Heart right ventricle (tissue), 16 donors: ENCODE measurements at regions of chr6 and their contacts with region 1.

Region 1: DNA sequence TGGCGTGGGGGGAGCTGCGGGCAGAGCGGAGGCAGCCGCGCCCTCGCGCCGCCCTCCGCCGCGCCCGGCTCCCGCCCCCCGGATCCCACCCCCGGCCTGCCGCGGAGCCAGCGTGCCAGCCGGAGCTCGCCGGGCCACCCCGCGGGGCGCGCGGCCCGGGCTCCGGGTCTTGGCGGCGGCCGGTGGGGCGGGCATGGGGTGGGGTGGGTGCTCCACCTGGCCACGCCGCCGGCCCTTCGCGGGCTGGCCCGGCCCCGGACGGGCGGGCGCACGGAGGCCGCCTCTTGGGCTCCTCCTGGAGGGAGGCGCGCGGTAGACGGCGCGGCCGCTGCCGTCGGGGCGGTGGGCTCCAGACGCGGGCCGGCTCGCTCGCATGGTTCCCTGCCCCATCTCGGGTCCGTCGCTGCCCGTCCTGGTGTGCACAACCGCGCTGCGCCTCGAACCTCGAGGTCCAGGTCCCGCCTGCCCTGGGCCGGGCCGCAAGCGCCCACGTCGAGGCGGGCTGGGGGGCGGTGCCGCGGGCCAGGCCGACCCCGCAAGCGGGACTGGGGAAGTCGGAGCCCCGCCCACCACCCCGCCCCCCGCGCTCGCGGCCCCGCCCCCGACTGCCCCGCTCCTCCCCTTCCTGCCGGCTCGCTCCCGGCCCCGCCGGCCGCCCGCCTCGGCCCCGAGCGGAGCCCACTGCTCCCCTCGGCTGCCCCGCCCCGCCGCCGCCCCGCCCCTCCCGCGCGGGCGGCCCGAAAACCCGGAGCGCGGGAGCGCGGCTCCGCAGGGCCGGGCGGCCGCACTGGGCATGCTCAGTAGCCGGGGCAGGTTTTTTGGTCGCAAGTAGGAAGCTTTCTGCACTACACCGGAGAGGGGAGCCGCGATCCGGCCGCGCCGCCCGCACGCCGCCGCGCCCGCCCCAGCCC is at the start of gene CDYL:
- DNase-seq: peak; percentile 85 to 92
- ATAC-seq: peak; percentile 87 to 94 (median 92)
- H3K4me3 ChIP-seq: peak within 1 kb of the TSS; percentile 63 to 82 (median 71)
- H3K27ac ChIP-seq: peak within 1 kb of the TSS in 9 of 10 donors; percentile 54 to 89 (median 80)
- H3K4me1 ChIP-seq: peaks cover 0 to 43% (median 18%) of the 10 kb centered on the region in 9 donors
- H3K27me3 ChIP-seq: no peaks in the 10 kb centered on the region
- CTCF ChIP-seq: peak in 7 of 9 donors; percentile 5 to 53 (median 33)
- total RNA-seq, gene CDYL: 29.0 to 39.9 (median 33.4) TPM

Region 2: GRCh38 chr6:4313044-4313686 is 462.7 kb before region 1 on chr6:
- intact Hi-C with region 1: loop called in 1 of 10 experiments (anchors 10 kb)
- DNase-seq: peak in 1 of 2 donors; percentile 36
- ATAC-seq: peak; percentile 35 to 75 (median 61)
- H3K4me3 ChIP-seq: no peak overlapping the region
- H3K27ac ChIP-seq: peak overlapping the region in 6 of 10 donors; percentile 6 to 57 (median 32)
- H3K4me1 ChIP-seq: peaks cover 3 to 29% (median 20%) of the 10 kb centered on the region in 9 donors
- H3K27me3 ChIP-seq: no peaks in the 10 kb centered on the region
- CTCF ChIP-seq: peak; percentile 13 to 60 (median 48)

Region 3: GRCh38 chr6:4344317-4344899 is 431.4 kb before region 1 on chr6:
- intact Hi-C with region 1: loop called in 1 of 10 experiments (anchors 10 kb)
- DNase-seq: no peak
- ATAC-seq: peak in 1 of 8 donors; percentile 28
- H3K4me3 ChIP-seq: peak overlapping the region in 6 of 10 donors; percentile 31 to 57 (median 54)
- H3K27ac ChIP-seq: peak overlapping the region in 4 of 10 donors; percentile 76 to 90 (median 86)
- H3K4me1 ChIP-seq: peaks cover 0 to 37% (median 8%) of the 10 kb centered on the region in 9 donors
- H3K27me3 ChIP-seq: no peaks in the 10 kb centered on the region
- CTCF ChIP-seq: no peak

Region 4: DNA sequence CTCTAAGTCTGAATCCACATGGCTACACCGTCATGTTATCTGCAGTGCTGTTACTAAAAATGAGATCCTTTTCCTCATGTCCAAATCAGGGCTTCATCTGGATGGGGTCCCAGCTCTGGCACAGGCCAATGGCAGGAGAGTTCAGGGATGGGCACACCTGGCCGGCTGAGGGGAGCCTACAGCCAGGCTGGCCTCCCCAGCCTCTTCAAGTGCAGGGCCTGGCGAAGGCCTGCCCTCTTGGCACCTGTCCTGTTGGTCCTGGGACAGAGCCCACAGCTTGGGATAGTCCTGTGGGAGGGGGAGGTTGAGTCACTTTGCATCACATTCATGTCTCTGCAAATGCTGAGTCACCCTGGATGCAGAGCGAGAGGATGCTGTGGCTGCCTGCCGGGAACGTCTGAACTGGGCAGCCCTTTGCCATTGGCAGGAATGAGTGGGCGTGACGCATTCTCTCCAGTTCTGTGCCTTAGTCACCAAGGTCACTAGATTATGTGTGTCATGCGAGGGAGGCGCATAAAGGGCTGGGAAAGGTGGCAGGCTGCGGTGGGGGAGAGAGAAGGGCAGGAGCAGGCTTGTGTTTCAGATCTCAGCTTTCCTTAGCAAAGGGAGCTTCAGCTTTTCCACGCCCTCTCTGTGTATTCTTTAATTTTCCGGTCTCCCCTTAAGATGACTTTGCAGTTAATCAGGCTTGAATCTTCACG is 417.3 kb before region 1 on chr6:
- intact Hi-C with region 1: loop called in 1 of 10 experiments (anchors 5 kb)
- DNase-seq: peak; percentile 86 to 91
- ATAC-seq: peak; percentile 89 to 98 (median 94)
- H3K4me3 ChIP-seq: peak overlapping the region in 2 of 10 donors; percentile 5 to 15
- H3K27ac ChIP-seq: peak overlapping the region; percentile 66 to 96 (median 90)
- H3K4me1 ChIP-seq: peaks cover 2 to 16% (median 13%) of the 10 kb centered on the region in 9 donors
- H3K27me3 ChIP-seq: no peaks in the 10 kb centered on the region
- CTCF ChIP-seq: no peak

Region 5: GRCh38 chr6:4647414-4648365 is 128.1 kb before region 1 on chr6:
- intact Hi-C with region 1: loop called in 8 of 10 experiments (anchors 2 to 10 kb)
- DNase-seq: peak; percentile 83 to 89
- ATAC-seq: peak; percentile 95 to 99 (median 98)
- H3K4me3 ChIP-seq: peak overlapping the region in 9 of 10 donors; percentile 18 to 42 (median 39)
- H3K27ac ChIP-seq: peak overlapping the region in 8 of 10 donors; percentile 14 to 65 (median 52)
- H3K4me1 ChIP-seq: peaks cover 0 to 13% (median 8%) of the 10 kb centered on the region in 9 donors
- H3K27me3 ChIP-seq: peaks cover 0 to 3% (median 0%) of the 10 kb centered on the region in 7 donors
- CTCF ChIP-seq: peak in 1 of 9 donors; percentile 6

Region 6: GRCh38 chr6:4936681-4937041 is 160.8 kb after region 1 on chr6:
- intact Hi-C with region 1: loop called in 5 of 10 experiments (anchors 5 to 10 kb)
- DNase-seq: peak in 1 of 2 donors; percentile 25
- ATAC-seq: peak in 3 of 8 donors; percentile 32 to 51 (median 38)
- H3K4me3 ChIP-seq: no peak overlapping the region
- H3K27ac ChIP-seq: no peak overlapping the region
- H3K4me1 ChIP-seq: peaks cover 6 to 43% (median 31%) of the 10 kb centered on the region in 9 donors
- H3K27me3 ChIP-seq: no peaks in the 10 kb centered on the region
- CTCF ChIP-seq: peak; percentile 36 to 80 (median 68)

Region 7: GRCh38 chr6:5003604-5004372 is 227.9 kb after region 1 on chr6 and contains the start of gene RPP40:
- intact Hi-C with region 1: loop called in 3 of 10 experiments (anchors 5 to 10 kb)
- DNase-seq: peak; percentile 98
- ATAC-seq: peak; percentile 99 to 100 (median 99)
- H3K4me3 ChIP-seq: peak within 1 kb of the TSS; percentile 39 to 83 (median 64)
- H3K27ac ChIP-seq: peak within 1 kb of the TSS; percentile 78 to 98 (median 90)
- H3K4me1 ChIP-seq: peaks cover 0 to 8% (median 4%) of the 10 kb centered on the region in 9 donors
- H3K27me3 ChIP-seq: no peaks in the 10 kb centered on the region
- CTCF ChIP-seq: peak; percentile 85 to 97 (median 91)
- total RNA-seq, gene RPP40: 2.1 to 5.8 (median 3.6) TPM